BJ (cell line): ENCODE measurements at regions of chr3 and their contacts with region 1.

Region 1: DNA sequence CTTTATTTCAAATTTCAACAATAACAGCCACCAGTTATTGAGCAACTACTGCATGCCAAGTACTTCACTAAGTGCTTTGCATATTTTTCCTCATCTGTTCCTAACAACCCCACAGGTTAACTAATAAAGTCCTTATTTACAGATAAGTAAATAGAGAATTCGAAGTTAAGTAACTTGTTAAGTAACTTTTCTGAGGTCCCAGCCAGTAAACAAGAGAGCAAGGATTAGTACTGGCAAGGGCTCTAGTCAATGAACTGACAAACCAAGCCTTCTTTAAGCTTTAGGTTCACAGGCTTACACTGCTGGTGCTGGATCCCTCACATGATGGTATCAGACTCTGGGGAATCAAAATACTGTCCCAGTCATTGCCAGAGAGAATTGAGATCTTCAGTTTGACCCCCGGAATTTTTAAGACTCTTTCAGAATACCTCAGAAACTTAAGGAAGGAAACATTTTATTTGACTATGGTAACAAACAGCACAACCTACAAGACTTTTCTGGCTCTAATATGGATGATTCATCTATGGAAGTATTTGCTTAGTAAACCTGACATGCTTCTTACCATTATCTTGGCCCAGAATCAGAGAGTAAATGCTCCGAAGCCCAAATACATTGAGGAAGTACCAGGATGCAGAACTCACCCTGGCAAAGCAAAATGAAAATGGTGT is 16.5 kb downstream of the EMC3 start:
- DNase-seq: peak; percentile 53
- H3K4me3 ChIP-seq: no peak overlapping the region
- H3K27me3 ChIP-seq: no peaks in the 10 kb centered on the region
- CTCF ChIP-seq: no peak

Region 2: GRCh38 chr3:9946112-9947024 is 23.8 kb before region 1 on chr3:
- CTCF ChIA-PET with region 1: interaction called, 11 read pairs
- POLR2A ChIA-PET with region 1: no interaction called
- DNase-seq: peak; percentile 45
- H3K4me3 ChIP-seq: peak overlapping the region; percentile 50
- H3K27me3 ChIP-seq: no peaks in the 10 kb centered on the region
- CTCF ChIP-seq: peak; percentile 45

Region 3: DNA sequence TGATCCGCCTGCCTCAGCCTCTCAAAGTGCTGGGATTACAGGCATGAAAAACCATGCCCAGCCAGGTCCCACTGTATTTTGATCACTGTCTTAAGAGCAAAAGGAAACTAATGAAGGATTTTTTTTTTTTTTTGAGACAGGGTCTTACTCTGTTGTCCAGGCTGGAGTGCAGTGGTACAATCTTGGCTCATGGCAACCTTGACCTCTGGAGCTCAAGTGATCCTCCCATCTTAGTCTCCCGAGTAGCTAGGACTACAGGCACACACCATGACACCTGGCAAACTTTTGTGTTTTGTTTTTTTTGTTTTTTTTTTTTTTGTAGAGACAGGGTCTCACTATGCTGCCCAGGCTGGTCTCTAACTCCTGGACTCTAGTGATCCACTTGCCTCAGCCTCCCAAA is 10.1 kb after region 1 on chr3:
- CTCF ChIA-PET with region 1: interaction called, 6 read pairs
- POLR2A ChIA-PET with region 1: interaction called, 19 read pairs
- DNase-seq: no peak
- H3K4me3 ChIP-seq: no peak overlapping the region
- H3K27me3 ChIP-seq: no peaks in the 10 kb centered on the region
- CTCF ChIP-seq: no peak